Spleen (tissue), 13 donors: ENCODE measurements at regions of chr11 and their contacts with region 1.

Region 1: GRCh38 chr11:65700391-65700790 is 11.7 kb upstream of the KAT5 start:
- DNase-seq: no peak
- H3K4me3 ChIP-seq: no peak overlapping the region
- H3K27ac ChIP-seq: no peak overlapping the region
- H3K4me1 ChIP-seq: no peaks in the 10 kb centered on the region
- H3K27me3 ChIP-seq: peaks cover 0 to 5% (median 0%) of the 10 kb centered on the region in 7 donors
- CTCF ChIP-seq: no peak
- POLR2A ChIP-seq: no peak

Region 2: GRCh38 chr11:64629796-64630562 is 1070.4 kb before region 1 on chr11:
- intact Hi-C with region 1: no loop called
- DNase-seq: no peak
- H3K4me3 ChIP-seq: no peak overlapping the region
- H3K27ac ChIP-seq: no peak overlapping the region
- H3K4me1 ChIP-seq: peaks cover 4 to 18% (median 5%) of the 10 kb centered on the region in 6 donors
- H3K27me3 ChIP-seq: peaks cover 0 to 15% (median 0%) of the 10 kb centered on the region in 7 donors
- CTCF ChIP-seq: no peak
- POLR2A ChIP-seq: no peak

Region 3: DNA sequence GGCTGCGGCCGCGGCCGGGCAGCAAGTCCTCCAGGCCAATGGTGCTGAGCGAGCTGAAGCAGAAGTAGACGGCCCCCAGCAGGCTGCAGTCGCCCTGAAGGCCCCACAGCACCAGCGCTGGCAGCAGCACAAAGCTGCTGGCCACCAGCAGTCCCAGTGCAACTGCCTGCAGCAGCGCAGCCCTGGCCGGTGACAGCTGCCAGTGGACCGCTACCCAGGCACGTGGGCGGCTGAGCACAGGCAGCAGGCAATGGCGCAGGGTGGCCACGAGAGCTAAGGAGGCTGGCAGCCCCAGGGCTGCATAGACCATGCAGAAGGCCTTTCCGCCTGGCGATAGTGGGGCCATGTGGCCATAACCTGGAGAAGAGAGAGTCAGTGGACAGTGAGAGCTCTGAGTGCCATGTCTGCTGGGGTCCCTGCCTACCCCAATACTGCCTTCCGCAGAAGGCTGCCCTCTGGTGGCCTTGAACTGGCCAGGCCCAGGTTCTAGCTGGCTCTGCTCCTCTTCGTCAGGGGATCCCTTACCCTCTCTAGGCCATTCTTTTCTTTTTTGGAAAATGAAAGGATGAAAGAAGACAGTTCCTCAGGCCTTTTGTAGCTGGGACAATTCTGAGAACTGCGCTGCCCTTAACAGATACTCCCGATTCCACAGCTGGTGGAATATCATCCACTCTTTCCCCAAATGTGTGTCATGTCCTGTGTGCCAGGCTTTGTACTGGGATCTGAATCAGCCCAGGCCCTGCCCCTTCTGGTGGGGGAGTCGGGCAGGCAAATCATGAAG is 106.7 kb before region 1 on chr11:
- intact Hi-C with region 1: no loop called
- DNase-seq: no peak
- H3K4me3 ChIP-seq: no peak overlapping the region
- H3K27ac ChIP-seq: peak overlapping the region in 4 of 8 donors; percentile 9 to 86 (median 78)
- H3K4me1 ChIP-seq: peaks cover 25 to 76% (median 57%) of the 10 kb centered on the region in 6 donors
- H3K27me3 ChIP-seq: no peaks in the 10 kb centered on the region
- CTCF ChIP-seq: peak; percentile 35 to 78 (median 60)
- POLR2A ChIP-seq: no peak

Region 4: DNA sequence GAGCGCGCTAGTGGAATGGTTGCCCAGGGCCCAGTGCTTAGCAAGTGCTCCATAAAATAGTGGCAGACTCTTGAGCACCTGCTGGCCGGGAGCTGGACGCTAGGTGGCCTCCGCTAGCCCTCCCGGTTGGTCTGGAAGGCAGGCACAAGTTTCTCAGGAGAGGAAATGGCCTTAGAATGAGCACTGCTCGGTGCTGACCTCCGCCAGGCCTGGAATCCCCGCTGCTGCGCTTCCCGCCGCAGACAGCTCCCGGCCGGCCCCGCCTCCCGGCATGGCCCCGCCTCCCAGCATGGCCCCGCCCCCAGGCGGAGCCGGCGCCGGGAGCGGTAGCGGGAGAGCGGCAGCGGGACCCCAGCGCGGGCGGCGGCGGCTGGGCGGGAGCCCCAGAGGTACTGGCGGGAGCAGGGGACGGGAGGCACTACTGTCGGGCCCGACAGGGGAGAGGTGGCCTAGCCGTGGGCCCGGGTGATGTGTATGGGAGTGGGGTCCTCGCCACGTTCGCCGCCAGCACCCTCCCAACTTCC is 62.5 kb before region 1 on chr11 and contains the start of gene SIPA1:
- intact Hi-C with region 1: loop called (anchors 10 kb)
- DNase-seq: peak; percentile 95
- H3K4me3 ChIP-seq: peak within 1 kb of the TSS; percentile 66 to 95 (median 88)
- H3K27ac ChIP-seq: peak within 1 kb of the TSS; percentile 79 to 99 (median 96)
- H3K4me1 ChIP-seq: peaks cover 64 to 96% (median 83%) of the 10 kb centered on the region in 6 donors
- H3K27me3 ChIP-seq: no peaks in the 10 kb centered on the region
- CTCF ChIP-seq: peak in 7 of 11 experiments; percentile 29 to 57 (median 51)
- POLR2A ChIP-seq: peak; percentile 13 to 71 (median 71)
- total RNA-seq, gene SIPA1: 167 to 308 (median 255) TPM

Region 5: GRCh38 chr11:65973439-65974110 is 273.2 kb after region 1 on chr11:
- intact Hi-C with region 1: no loop called
- DNase-seq: no peak
- H3K4me3 ChIP-seq: no peak overlapping the region
- H3K27ac ChIP-seq: no peak overlapping the region
- H3K4me1 ChIP-seq: peaks cover 0 to 20% (median 9%) of the 10 kb centered on the region in 6 donors
- H3K27me3 ChIP-seq: no peaks in the 10 kb centered on the region
- CTCF ChIP-seq: no peak
- POLR2A ChIP-seq: no peak